ENCODE measurements at regions of chr16 and their contacts with region 1.

Region 1: GRCh38 chr16:25014500-25015147 is 545 bp downstream of the ARHGAP17 start:
- DNase-seq: peak; percentile 38
- H3K4me3 Mint-ChIP-seq: peak overlapping the region; percentile 86
- H3K27ac Mint-ChIP-seq: peak overlapping the region; percentile 91
- H3K4me1 Mint-ChIP-seq: peaks cover 77% of the 10 kb centered on the region
- H3K27me3 Mint-ChIP-seq: no peaks in the 10 kb centered on the region

Region 2: DNA sequence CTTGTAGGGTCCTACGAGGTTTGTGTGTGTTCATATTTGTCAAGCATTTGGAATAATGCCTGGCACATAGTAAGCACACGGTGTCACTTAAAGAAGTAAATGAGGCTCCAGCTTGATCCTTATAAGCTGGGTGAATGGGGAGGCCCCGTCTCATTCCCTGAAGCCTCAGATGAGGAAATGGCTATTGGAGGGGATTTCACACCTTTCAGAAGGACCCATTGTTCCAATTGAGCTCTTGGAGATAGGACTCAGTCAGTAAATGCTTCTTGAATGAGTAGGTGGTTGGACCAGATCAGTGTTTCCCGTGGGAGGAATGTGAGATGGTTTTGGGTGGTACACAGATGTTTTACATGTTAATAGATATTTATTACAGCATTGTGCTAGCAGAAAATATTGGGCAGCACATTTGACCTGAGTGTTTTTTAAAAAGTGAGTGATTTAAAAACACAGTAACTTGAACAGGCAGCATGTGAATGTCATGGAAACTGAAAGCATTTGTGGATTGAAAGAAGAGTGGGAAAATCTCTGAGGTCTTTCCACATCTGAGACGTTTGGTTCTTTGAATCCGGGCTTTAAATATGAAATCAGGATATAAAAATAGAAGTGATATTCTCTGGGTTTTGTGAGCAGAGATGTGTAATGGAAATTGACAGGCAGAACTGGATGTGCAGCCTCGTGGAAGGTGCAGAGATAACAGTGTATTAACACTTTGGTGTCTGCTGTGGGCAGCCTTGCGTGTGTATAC is 37.0 kb after region 1 on chr16:
- CTCF ChIA-PET with region 1: interaction called, 11 read pairs
- DNase-seq: no peak
- H3K4me3 Mint-ChIP-seq: peak overlapping the region; percentile 21
- H3K27ac Mint-ChIP-seq: peak overlapping the region; percentile 86
- H3K4me1 Mint-ChIP-seq: peaks cover 65% of the 10 kb centered on the region
- H3K27me3 Mint-ChIP-seq: no peaks in the 10 kb centered on the region

Measured in activated naive CD4-positive, alpha-beta T cell treated with anti-CD3 and anti-CD28 coated beads, Interleukin-2, amount 10 ng/mL, durations not matched to agents 7 days and 5 days (primary cell).